Activated CD4-positive, alpha-beta T cell treated with anti-CD3 and anti-CD28 coated beads, Interleukin-2, amount 10 ng/mL, durations not matched to agents 24 days and 14 days (primary cell): ENCODE measurements at regions of chr14 and their contacts with region 1.

Region 1: DNA sequence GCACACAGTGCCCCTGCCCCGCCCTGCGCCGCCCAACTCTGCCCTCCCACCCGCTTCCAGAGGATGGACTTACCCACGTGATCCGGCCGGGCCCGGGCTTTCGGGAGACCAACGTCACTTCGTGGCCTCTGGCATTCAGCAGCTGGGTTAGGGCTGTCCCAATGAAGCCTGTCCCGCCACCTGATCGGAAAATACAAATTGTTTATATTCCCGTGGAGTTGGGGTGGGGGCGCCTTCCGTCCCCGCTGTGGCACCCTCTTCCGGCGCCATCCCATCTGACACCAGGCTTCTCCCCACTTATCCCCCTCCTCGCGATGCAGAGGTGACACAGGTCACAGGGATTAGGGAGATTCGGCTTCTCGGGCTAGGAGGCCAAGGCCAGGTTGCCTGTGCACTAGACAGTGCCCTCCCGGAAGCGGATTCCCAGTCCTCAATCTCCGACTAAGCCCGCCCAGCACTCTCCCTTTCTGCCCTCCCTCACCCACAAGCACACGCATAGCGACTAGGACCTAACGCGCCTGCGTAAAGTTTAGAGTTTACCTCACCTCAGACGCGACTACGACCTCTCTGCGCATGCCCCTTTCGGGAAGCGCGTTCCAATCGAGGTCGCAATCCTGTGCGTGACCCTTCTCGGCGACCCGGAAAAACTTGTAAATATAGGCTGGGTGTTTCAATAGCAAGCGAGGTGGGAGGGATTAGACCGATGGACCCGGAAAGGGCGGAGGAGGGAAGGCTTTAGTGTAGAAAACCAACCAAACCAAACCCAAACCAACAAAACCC is at the start of gene SDR39U1:
- DNase-seq: peak; percentile 99
- H3K4me3 Mint-ChIP-seq: peak within 1 kb of the TSS; percentile 98
- H3K27ac Mint-ChIP-seq: peak within 1 kb of the TSS; percentile 99
- H3K4me1 Mint-ChIP-seq: peaks cover 49% of the 10 kb centered on the region
- H3K27me3 Mint-ChIP-seq: peaks cover 4% of the 10 kb centered on the region
- total RNA-seq, gene SDR39U1: 40.8 and 49.7 TPM in 2 replicates

Region 2: DNA sequence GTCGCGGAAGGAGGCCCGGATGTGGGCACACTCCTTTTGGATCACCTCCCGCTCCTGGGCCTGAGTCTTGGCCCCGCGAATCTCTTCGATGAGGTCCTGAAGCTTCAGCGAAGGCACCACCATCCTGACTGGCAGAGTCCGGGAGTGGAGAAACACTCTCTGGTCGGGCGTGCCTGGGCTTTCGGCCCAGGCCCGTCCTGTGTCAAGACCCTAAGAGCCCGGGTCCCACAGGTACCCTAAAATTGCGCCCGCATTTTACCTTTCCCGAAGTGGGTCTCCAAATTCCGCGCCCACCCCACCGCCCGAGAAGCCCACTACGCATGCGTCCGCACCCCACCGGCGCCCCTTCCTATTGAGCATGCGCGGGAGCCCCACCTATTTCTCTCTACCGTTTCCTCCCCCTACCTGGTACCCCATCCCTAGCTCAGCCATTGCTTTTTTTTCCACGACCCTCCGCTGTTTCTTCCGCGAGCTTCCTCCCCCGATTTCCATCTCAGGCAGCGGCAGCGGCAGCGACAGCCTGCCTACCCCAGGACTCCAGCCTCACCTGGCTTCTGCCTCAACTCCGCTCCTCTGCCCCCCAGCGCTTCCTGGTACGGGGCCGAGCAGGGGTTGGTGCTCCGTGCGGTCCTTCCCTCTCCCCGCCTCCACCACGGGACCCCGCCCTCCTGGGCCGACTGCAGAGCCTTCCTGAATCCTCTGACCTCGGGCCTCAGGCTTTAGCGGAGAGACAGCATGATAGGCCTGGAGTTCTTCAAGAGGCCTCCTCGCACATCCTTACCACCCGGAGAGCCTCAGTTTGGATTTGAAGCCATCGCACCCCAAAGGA is 875.1 kb before region 1 on chr14 and contains the start of gene AP1G2:
- intact Hi-C with region 1: loop called (anchors 10 kb)
- DNase-seq: peak; percentile 97
- H3K4me3 Mint-ChIP-seq: peak within 1 kb of the TSS; percentile 99
- H3K27ac Mint-ChIP-seq: peak within 1 kb of the TSS; percentile 98
- H3K4me1 Mint-ChIP-seq: peaks cover 35% of the 10 kb centered on the region
- H3K27me3 Mint-ChIP-seq: peaks cover under 1% of the 10 kb centered on the region
- total RNA-seq, gene AP1G2: 135 and 142 TPM in 2 replicates

Region 3: GRCh38 chr14:24271134-24271833 is 171.2 kb before region 1 on chr14 and contains the start of gene RABGGTA:
- intact Hi-C with region 1: loop called (anchors 1 kb)
- DNase-seq: peak; percentile 97
- H3K4me3 Mint-ChIP-seq: peak within 1 kb of the TSS; percentile 93
- H3K27ac Mint-ChIP-seq: peak within 1 kb of the TSS; percentile 95
- H3K4me1 Mint-ChIP-seq: peaks cover 42% of the 10 kb centered on the region
- H3K27me3 Mint-ChIP-seq: no peaks in the 10 kb centered on the region
- total RNA-seq, gene RABGGTA: 49.6 and 51.1 TPM in 2 replicates

Region 4: DNA sequence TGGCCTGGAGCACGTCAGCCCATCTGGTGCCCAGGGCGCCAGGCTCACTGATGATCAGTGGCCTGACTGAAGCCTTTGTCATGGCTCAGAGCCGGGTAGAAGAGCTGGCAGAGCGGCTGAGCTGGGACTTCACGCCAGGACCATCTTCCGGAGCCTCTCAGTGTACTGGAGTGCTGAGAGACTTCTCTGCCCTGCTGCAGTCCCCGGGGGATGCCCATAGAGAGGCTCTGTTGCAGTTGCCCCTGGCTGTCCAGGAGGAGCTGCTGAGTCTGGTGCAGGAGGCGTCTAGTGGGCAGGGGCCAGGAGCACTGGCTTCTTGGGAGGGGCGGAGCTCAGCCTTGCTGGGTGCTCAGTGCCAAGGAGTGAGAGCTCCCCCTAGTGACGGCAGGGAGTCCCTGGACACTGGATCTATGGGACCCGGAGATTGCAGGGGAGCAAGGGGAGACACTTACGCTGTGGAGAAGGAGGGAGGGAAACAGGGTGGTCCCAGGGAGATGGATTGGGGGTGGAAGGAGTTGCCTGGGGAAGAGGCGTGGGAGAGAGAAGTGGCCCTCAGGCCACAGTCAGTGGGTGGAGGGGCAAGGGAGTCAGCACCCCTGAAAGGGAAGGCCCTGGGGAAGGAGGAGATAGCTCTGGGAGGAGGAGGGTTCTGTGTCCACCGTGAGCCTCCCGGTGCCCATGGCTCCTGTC is 10.7 kb before region 1 on chr14:
- intact Hi-C with region 1: loop called (anchors 1 kb)
- DNase-seq: peak; percentile 97
- H3K4me3 Mint-ChIP-seq: peak overlapping the region; percentile 92
- H3K27ac Mint-ChIP-seq: peak overlapping the region; percentile 94
- H3K4me1 Mint-ChIP-seq: peaks cover 45% of the 10 kb centered on the region
- H3K27me3 Mint-ChIP-seq: no peaks in the 10 kb centered on the region

Region 5: GRCh38 chr14:24456980-24457379 is 14.5 kb after region 1 on chr14:
- intact Hi-C with region 1: no loop called
- DNase-seq: no peak
- H3K4me3 Mint-ChIP-seq: no peak overlapping the region
- H3K27ac Mint-ChIP-seq: no peak overlapping the region
- H3K4me1 Mint-ChIP-seq: no peaks in the 10 kb centered on the region
- H3K27me3 Mint-ChIP-seq: no peaks in the 10 kb centered on the region

Region 6: GRCh38 chr14:24678801-24679247 is 236.4 kb after region 1 on chr14:
- intact Hi-C with region 1: loop called (anchors 2 kb)
- DNase-seq: peak; percentile 95
- H3K4me3 Mint-ChIP-seq: peak overlapping the region; percentile 87
- H3K27ac Mint-ChIP-seq: peak overlapping the region; percentile 91
- H3K4me1 Mint-ChIP-seq: peaks cover 60% of the 10 kb centered on the region
- H3K27me3 Mint-ChIP-seq: no peaks in the 10 kb centered on the region